Activated CD4-positive, alpha-beta memory T cell treated with anti-CD3 and anti-CD28 coated beads, Interleukin-2, amount 10 ng/mL, durations not matched to agents 7 days and 5 days (primary cell): ENCODE measurements at regions of chrX and their contacts with region 1.

Region 1: DNA sequence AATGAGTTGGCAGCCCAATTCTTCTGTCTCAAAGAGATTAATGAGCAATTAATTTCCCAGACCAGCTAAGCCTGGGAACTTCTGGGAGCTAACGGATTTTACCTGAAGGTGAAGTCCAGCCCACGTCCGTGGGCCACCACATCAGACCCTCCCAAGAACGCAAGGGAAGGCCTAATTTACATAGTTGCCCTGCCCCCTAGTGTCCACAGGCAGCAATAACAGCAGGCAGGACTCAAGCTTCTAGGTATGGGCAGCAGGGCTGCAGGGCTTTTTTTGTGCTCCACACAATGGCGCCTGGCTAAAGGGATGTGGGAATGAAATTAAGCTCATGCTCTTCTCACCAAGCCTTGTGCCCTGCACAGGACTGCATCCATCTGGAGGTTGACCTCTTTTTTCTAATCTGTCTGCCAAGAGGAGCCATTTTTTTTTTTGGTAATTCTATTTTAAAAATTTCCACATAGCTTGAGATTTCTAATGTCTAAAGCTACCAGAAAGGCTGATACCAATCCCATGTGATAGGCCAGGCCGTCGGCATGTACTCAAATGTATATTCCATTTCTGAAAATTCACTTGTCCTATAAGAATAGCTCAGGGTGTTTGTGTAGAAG is 111.9 kb upstream of the TMEM164 start:
- DNase-seq: peak; percentile 45
- H3K4me3 Mint-ChIP-seq: no peak overlapping the region
- H3K27ac Mint-ChIP-seq: no peak overlapping the region
- H3K4me1 Mint-ChIP-seq: no peaks in the 10 kb centered on the region
- H3K27me3 Mint-ChIP-seq: peaks cover 5% of the 10 kb centered on the region

Region 2: GRCh38 chrX:109485470-109486340 is 405.3 kb before region 1 on chrX:
- CTCF ChIA-PET with region 1: interaction called, 19 read pairs
- POLR2A ChIA-PET with region 1: no interaction called
- DNase-seq: peak; percentile 58
- H3K4me3 Mint-ChIP-seq: no peak overlapping the region
- H3K27ac Mint-ChIP-seq: no peak overlapping the region
- H3K4me1 Mint-ChIP-seq: no peaks in the 10 kb centered on the region
- H3K27me3 Mint-ChIP-seq: peaks cover 3% of the 10 kb centered on the region

Region 3: DNA sequence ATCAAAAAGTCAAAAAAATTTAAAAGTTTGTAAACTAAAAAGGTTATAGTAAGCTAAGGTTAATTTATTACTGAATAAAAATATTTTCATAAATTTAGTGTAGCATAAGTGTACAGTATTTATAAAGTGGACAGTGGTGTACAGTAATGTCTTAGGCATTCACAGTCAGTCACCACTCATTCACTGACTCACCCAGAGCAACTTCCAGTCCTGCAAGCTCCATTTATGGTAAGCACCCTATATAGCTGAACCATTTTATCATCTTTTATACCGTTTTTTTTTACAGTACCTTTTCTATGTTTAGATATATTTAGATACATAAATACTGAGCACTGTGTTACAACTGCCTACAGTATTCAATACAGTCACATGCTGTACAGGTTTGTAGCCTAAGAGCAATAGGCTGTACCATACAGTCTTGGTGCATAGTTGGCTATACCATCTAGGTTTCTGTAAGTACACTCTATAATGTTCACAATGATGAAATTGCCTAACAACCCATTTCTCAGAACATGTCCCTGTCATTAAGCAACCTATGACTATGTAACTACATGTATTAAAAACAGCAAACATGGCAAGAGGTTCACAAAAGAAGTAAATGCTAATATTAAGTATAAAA is 176.6 kb before region 1 on chrX:
- CTCF ChIA-PET with region 1: interaction called, 19 read pairs
- POLR2A ChIA-PET with region 1: no interaction called
- DNase-seq: no peak
- H3K4me3 Mint-ChIP-seq: no peak overlapping the region
- H3K27ac Mint-ChIP-seq: no peak overlapping the region
- H3K4me1 Mint-ChIP-seq: peaks cover 25% of the 10 kb centered on the region
- H3K27me3 Mint-ChIP-seq: no peaks in the 10 kb centered on the region

Region 4: DNA sequence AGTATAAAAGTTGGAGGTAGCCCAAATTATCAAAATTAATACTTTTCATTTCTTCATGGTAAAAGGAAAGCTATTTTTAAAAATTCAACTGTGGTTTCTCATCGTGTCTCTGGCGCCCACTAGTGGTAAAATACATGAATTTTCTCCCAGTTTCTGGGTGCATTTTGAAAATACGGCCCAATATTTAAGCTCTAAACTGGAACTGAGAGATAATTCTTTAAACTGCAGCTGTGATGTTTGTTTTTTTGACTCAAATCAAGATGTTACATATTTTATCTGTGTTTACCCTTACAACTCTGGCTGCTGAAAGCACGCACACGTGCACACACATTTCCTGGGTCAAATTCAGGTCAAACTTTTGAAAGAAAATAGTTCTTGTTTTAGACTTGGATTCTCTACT is 34.0 kb before region 1 on chrX:
- CTCF ChIA-PET with region 1: interaction called, 13 read pairs
- POLR2A ChIA-PET with region 1: no interaction called
- DNase-seq: no peak
- H3K4me3 Mint-ChIP-seq: no peak overlapping the region
- H3K27ac Mint-ChIP-seq: no peak overlapping the region
- H3K4me1 Mint-ChIP-seq: peaks cover 5% of the 10 kb centered on the region
- H3K27me3 Mint-ChIP-seq: no peaks in the 10 kb centered on the region

Region 5: GRCh38 chrX:109880629-109881028 is 10.4 kb before region 1 on chrX:
- CTCF ChIA-PET with region 1: interaction called, 14 read pairs
- POLR2A ChIA-PET with region 1: no interaction called
- DNase-seq: no peak
- H3K4me3 Mint-ChIP-seq: no peak overlapping the region
- H3K27ac Mint-ChIP-seq: no peak overlapping the region
- H3K4me1 Mint-ChIP-seq: no peaks in the 10 kb centered on the region
- H3K27me3 Mint-ChIP-seq: peaks cover 9% of the 10 kb centered on the region

Region 6: DNA sequence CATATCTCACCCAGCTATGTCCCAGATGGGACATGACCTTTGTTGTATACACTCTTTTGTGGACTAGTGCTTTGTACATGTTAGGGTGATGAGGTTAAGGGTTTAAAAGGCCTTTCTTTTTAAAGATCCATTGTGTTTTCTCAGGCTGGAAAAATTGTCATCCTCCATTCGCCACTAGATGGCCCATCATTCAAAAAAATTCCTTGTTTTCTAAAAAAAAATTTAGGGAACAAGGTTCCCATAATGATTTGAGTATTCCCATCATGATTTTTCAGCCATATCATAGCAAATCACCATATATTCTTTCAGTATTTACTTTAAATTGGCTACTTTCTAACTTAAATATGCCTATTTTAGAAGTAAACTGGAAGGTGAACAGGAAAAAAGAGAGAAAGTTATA is 20.0 kb after region 1 on chrX:
- CTCF ChIA-PET with region 1: interaction called, 10 read pairs
- POLR2A ChIA-PET with region 1: no interaction called
- DNase-seq: no peak
- H3K4me3 Mint-ChIP-seq: no peak overlapping the region
- H3K27ac Mint-ChIP-seq: no peak overlapping the region
- H3K4me1 Mint-ChIP-seq: no peaks in the 10 kb centered on the region
- H3K27me3 Mint-ChIP-seq: peaks cover 2% of the 10 kb centered on the region

Region 7: GRCh38 chrX:110086916-110087484 is 196.0 kb after region 1 on chrX:
- CTCF ChIA-PET with region 1: no interaction called
- POLR2A ChIA-PET with region 1: no interaction called
- DNase-seq: no peak
- H3K4me3 Mint-ChIP-seq: no peak overlapping the region
- H3K27ac Mint-ChIP-seq: no peak overlapping the region
- H3K4me1 Mint-ChIP-seq: peaks cover 28% of the 10 kb centered on the region
- H3K27me3 Mint-ChIP-seq: no peaks in the 10 kb centered on the region

Region 8: DNA sequence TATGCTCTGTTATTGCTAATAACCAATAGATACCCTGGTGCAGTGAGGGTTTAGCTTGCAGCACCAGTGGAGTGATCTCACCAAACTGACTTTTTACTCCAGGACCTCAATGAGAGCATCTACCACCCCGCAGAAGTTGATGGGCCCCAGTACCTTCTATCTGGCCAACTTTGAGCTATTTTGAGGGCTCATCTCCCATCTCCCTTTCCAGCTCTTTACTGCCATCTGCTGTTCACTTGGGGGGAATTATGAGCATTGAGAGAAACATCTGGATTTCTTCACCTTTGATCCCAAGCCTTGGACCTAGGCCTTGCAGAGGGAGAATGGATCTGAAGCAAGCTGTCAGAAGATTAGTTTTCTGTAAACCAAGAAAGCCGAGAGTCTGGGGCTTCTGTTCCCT is 255.5 kb after region 1 on chrX:
- CTCF ChIA-PET with region 1: interaction called, 14 read pairs
- POLR2A ChIA-PET with region 1: no interaction called
- DNase-seq: peak; percentile 22
- H3K4me3 Mint-ChIP-seq: no peak overlapping the region
- H3K27ac Mint-ChIP-seq: no peak overlapping the region
- H3K4me1 Mint-ChIP-seq: peaks cover 7% of the 10 kb centered on the region
- H3K27me3 Mint-ChIP-seq: no peaks in the 10 kb centered on the region